PC-9 (cell line): ENCODE measurements at regions of chr11 and their contacts with region 1.

Region 1: DNA sequence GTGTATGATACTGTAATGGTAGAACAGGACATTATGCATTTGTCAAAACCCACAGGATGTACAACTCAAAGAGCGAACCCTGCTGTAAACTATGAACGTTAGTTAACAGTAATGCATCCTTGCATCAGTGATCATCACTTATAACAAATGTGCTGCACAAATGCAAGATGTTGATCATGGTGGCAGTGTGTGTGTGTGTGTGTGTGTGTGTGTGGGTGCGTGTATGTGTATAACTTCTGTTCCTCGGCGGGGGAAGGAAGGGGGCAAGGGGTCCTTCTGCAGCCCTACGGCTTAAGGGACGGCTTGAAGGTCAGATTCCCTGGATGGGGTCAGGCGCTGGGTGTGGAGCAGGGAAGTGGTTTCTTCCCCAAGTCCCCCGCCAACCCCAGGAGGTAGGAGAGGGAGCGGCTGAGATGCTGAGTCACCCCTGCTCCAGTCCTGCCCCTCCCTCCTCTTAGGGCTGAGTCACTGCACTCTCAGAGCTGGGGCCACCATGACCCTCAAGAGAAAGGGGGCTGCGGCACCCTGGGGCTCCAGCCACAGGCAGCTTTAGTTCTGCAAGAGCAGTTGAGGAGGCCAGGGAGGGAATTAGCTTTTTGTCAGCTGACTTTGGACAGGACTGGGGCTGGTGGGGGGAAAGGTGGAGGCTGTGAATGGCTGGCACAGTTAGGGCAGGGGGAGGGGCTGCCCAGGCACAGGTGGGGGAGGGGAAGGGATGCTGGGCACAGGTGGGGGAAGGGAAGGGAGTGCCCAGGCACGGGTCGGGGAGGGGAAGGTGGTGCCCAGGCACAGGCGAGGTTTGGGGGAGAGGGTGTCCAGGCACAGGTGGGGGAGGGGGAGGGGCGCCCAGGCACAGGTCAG is 8.8 kb upstream of the CTSD start:
- DNase-seq: peak; percentile 81
- H3K4me3 ChIP-seq: peak overlapping the region; percentile 13; the same call in 1 of the 2 replicates
- H3K27ac ChIP-seq: peak overlapping the region; percentile 93
- H3K4me1 ChIP-seq: peaks cover 59% of the 10 kb centered on the region
- H3K27me3 ChIP-seq: no peaks in the 10 kb centered on the region
- CTCF ChIP-seq: no peak

Region 2: DNA sequence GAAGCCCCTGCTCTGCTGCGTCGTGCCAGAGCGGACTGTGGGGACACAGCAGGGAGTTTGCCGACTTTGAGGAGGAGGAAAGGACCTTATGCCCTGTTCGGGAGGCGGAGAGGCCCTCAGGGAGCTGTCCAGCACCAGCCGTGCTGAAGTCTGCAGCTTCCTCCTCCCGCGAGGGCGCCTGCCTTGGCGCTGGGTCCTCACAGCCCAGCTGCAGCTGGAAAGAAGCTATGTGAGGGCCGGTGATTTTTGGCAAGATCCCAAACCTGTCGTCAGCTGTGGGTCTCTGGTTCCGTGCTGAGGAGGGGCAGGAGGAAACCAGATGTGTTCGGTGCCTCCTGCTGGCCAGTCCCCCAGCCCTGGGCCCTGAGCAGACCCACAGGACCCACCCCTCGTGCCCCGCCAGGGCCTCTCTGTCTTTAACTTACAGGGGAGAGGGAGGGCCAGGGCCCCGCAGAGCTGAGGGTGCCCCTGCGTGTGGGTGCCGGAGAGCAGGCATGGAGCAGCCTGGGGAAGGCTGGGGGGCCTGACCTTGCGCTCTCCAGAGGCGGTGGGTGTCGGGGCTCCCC is 370.8 kb before region 1 on chr11:
- CTCF ChIA-PET with region 1: no interaction called
- POLR2A ChIA-PET with region 1: no interaction called
- intact Hi-C with region 1: no loop called
- DNase-seq: peak; percentile 47 to 59
- H3K4me3 ChIP-seq: no peak overlapping the region
- H3K27ac ChIP-seq: no peak overlapping the region
- H3K4me1 ChIP-seq: no peaks in the 10 kb centered on the region
- H3K27me3 ChIP-seq: peaks cover 29% of the 10 kb centered on the region
- CTCF ChIP-seq: no peak

Region 3: GRCh38 chr11:1559119-1559951 is 213.2 kb before region 1 on chr11:
- CTCF ChIA-PET with region 1: no interaction called
- POLR2A ChIA-PET with region 1: interaction called, 47 read pairs
- intact Hi-C with region 1: no loop called
- DNase-seq: peak; percentile 79 to 92
- H3K4me3 ChIP-seq: peak overlapping the region; percentile 50; the same call in 1 of the 2 replicates
- H3K27ac ChIP-seq: 0 out of 2 replicates have a peak overlapping the region, but pooled peaks have one; percentile 14
- H3K4me1 ChIP-seq: peaks cover 29% of the 10 kb centered on the region
- H3K27me3 ChIP-seq: no peaks in the 10 kb centered on the region
- CTCF ChIP-seq: no peak

Region 4: DNA sequence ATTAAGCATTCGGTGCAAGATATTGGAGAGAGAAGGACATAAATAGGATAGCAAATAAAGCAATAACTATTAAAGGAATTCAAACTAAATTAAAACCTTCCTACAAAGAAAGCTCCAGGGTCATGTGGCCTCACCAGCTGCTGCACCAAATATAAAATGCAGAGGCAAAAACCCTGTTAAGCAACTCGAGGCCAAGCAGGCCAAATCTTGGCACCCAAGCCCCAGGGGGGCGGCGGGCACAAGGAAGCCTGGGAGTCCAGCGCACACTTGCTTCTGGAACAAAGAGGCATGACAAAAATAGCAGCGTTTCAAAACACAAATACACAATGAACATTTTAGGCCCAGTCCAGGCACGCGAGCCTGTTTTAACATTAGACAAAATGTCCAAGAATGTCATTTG is 54.8 kb before region 1 on chr11:
- CTCF ChIA-PET with region 1: no interaction called
- POLR2A ChIA-PET with region 1: no interaction called
- intact Hi-C with region 1: no loop called
- DNase-seq: no peak
- H3K4me3 ChIP-seq: no peak overlapping the region
- H3K27ac ChIP-seq: no peak overlapping the region
- H3K4me1 ChIP-seq: no peaks in the 10 kb centered on the region
- H3K27me3 ChIP-seq: no peaks in the 10 kb centered on the region
- CTCF ChIP-seq: no peak

Region 5: GRCh38 chr11:1796413-1797011 is 24.0 kb after region 1 on chr11:
- CTCF ChIA-PET with region 1: no interaction called
- POLR2A ChIA-PET with region 1: interaction called, 36 read pairs
- intact Hi-C with region 1: no loop called
- DNase-seq: peak; percentile 34 to 44
- H3K4me3 ChIP-seq: no peak overlapping the region
- H3K27ac ChIP-seq: no peak overlapping the region
- H3K4me1 ChIP-seq: peaks cover 8% of the 10 kb centered on the region; the same call in 1 of the 2 replicates
- H3K27me3 ChIP-seq: no peaks in the 10 kb centered on the region
- CTCF ChIP-seq: peak; percentile 27; the same call in 1 of the 2 replicates